ENCODE measurements at regions of chr1 and their contacts with region 1.

Region 1: GRCh38 chr1:150168960-150169601 is 19.4 kb downstream of the PLEKHO1 start:
- DNase-seq: peak; percentile 65 to 92
- ATAC-seq: peak; percentile 76 to 89
- H3K4me3 ChIP-seq: no peak overlapping the region
- H3K27ac ChIP-seq: no peak overlapping the region
- H3K4me1 ChIP-seq: no peaks in the 10 kb centered on the region
- CTCF ChIP-seq: peak; percentile 88
- EP300 ChIP-seq: no peak
- POLR2A ChIP-seq: no peak
- RAD21 ChIP-seq: peak; percentile 87 to 90

Region 2: DNA sequence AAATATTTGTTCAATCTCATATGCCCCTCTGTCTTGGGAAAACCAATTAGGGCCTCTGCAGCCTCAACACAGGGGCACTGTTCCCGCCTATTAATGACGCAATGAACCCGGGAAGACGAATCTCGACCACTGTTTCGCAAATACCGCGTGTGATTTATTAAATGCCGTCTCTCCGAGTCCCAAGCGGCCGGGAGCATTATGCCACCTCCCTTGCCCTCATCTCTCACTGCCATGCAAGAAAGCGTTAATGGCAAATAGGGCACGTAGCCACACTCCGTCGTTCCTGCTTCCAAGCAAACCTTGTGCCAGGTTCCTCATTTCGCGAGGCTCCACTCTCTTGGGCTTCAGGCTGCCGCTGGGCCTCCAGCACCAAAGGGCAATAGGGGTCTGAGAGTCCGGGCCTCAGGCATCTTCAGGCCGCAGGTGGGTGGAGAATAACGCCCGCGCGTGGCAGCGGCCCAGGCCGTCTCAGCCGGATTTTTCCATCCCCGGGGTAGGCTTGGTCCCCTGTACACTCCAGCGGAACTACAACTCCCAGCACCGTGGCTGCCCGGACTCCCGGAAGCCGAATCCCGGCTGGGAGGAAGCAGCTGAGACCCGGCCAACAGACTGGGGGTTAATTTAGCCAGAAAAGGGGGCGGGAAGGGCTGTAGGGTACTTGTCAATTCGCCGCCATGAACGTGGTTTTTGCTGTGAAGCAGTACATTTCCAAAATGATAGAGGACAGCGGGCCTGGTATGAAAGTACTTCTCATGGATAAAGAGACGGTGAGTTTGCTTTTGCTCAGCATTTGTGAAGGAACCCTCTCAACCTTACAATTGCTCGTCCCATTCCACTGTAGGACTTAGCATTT is 101.7 kb before region 1 on chr1 and contains the start of gene VPS45:
- CTCF ChIA-PET with region 1: interaction called, 244 read pairs
- POLR2A ChIA-PET with region 1: no interaction called
- DNase-seq: peak; percentile 92 to 93
- ATAC-seq: peak; percentile 98 to 99
- H3K4me3 ChIP-seq: peak within 1 kb of the TSS; percentile 80
- H3K27ac ChIP-seq: peak within 1 kb of the TSS; percentile 92 to 96
- H3K4me1 ChIP-seq: peaks cover 18% of the 10 kb centered on the region
- CTCF ChIP-seq: no peak
- EP300 ChIP-seq: no peak
- POLR2A ChIP-seq: peak; percentile 39; the same call in 1 of the 2 replicates
- RAD21 ChIP-seq: peak in 1 of 2 experiments; percentile 6; a peak in 1 of 5 replicates
- polyA plus RNA-seq, gene VPS45: 45.0 and 49.7 TPM in 2 replicates

Region 3: DNA sequence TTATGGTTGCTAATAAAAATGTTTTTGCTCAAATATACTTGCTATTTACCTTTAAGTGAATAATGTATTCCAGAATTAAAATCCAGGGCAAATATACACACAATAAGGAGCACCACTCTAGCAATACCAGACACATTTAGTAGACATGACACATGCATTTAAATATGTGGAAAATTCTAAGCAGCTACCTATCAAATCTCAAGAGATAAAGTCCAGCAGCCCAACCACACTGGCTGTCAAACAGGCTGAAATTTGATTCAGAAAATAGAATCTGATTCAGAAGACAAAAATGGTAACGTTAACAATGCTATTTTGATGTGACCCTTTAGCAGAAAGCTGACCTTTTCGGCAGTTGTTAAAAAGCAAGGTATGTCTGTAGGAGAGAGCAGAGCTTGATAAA is 22.9 kb after region 1 on chr1:
- CTCF ChIA-PET with region 1: interaction called, 73 read pairs
- POLR2A ChIA-PET with region 1: no interaction called
- DNase-seq: peak in 1 of 2 experiments; percentile 59
- ATAC-seq: peak; percentile 78 to 81; a peak in 4 of 6 replicates
- H3K4me3 ChIP-seq: no peak overlapping the region
- H3K27ac ChIP-seq: peak overlapping the region in 1 of 2 experiments; percentile 50; a peak in 2 of 6 replicates
- H3K4me1 ChIP-seq: peaks cover 17% of the 10 kb centered on the region
- CTCF ChIP-seq: no peak
- EP300 ChIP-seq: no peak
- POLR2A ChIP-seq: no peak
- RAD21 ChIP-seq: no peak

Measured in A549 (cell line).